Activated CD8-positive, alpha-beta memory T cell treated with anti-CD3 and anti-CD28 coated beads, Interleukin-2, amount 10 ng/mL, durations not matched to agents 7 days and 5 days (primary cell): ENCODE measurements at regions of chr6 and their contacts with region 1.

Region 1: DNA sequence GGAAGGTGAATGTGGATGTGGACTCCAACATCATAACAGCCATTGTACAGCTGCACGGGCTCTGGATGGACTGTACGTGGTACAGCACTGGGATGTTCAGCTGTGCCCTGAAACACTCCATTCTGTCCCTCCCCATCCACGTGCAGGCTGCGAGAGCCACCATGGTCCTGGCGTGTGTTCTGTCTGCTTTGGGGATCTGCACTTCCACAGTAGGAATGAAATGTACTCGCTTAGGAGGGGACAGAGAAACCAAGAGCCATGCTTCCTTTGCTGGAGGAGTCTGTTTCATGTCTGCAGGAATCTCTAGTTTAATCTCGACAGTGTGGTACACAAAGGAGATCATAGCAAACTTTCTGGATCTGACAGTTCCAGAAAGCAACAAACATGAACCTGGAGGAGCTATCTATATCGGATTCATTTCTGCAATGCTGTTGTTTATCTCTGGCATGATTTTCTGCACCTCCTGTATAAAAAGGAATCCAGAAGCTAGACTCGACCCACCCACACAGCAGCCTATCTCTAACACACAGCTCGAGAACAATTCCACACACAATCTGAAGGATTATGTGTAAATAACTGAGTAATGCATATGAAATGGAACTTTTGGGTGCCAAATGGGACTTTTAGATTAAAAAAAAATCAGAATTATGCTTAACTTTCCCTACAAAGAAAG is 12.1 kb downstream of the CLDN20 start:
- DNase-seq: no peak
- ATAC-seq: no peak
- H3K4me3 Mint-ChIP-seq: no peak overlapping the region
- H3K27ac Mint-ChIP-seq: no peak overlapping the region
- H3K4me1 Mint-ChIP-seq: peaks cover 6% of the 10 kb centered on the region
- H3K27me3 Mint-ChIP-seq: no peaks in the 10 kb centered on the region

Region 2: DNA sequence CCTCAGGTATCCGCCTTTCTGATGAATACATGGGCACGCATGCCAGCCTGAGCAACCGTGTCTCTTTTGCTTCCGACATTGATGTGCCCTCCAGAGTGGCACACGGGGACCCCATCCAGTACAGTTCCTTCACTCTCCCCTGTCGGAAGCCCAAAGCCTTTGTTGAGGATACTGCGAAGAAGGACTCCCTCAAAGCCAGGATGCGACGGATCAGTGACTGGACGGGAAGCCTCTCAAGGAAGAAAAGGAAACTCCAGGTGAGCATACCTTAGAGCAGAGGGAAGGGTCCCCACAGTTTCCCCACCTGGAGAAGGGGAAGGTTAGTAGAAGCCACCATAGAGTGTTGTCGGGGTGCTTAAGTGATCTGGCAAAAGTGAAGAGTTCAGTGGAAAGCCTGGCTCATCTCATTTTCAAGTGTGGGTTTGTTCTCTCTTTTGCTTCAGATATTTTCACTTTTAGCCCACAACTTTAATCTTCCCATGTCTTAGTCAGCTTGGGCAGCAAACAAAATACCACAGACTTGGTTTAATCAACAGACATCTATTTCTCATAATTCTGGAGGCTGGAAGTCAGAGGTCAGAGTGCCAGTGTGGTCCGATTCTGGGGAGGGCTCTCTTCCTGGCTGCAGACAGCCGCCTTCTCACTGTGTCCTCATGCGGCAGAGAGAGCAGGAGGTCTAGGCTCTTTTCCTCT is 145.6 kb before region 1 on chr6:
- CTCF ChIA-PET with region 1: no interaction called
- DNase-seq: no peak
- ATAC-seq: no peak
- H3K4me3 Mint-ChIP-seq: no peak overlapping the region
- H3K27ac Mint-ChIP-seq: no peak overlapping the region
- H3K4me1 Mint-ChIP-seq: peaks cover 28% of the 10 kb centered on the region
- H3K27me3 Mint-ChIP-seq: no peaks in the 10 kb centered on the region

Region 3: GRCh38 chr6:155287762-155288161 is 11.8 kb after region 1 on chr6:
- CTCF ChIA-PET with region 1: interaction called, 10 read pairs
- DNase-seq: no peak
- ATAC-seq: no peak
- H3K4me3 Mint-ChIP-seq: no peak overlapping the region
- H3K27ac Mint-ChIP-seq: no peak overlapping the region
- H3K4me1 Mint-ChIP-seq: peaks cover 12% of the 10 kb centered on the region
- H3K27me3 Mint-ChIP-seq: no peaks in the 10 kb centered on the region